CD14-positive monocyte (primary cell): ENCODE measurements at regions of chr17 and their contacts with region 1.

Region 1: GRCh38 chr17:62898220-62898864 is 67.7 kb upstream of the TANC2 start:
- DNase-seq: no peak
- H3K4me3 ChIP-seq: no peak overlapping the region
- H3K4me3 Mint-ChIP-seq: no peak overlapping the region
- H3K27ac ChIP-seq: no peak overlapping the region
- H3K27ac Mint-ChIP-seq: peak overlapping the region in 3 of 7 donors; percentile 81 to 89 (median 88)
- H3K4me1 ChIP-seq: peaks cover 40 to 41% of the 10 kb centered on the region in 2 donors
- H3K4me1 Mint-ChIP-seq: peaks cover 43% of the 10 kb centered on the region
- H3K27me3 ChIP-seq: no peaks in the 10 kb centered on the region
- H3K27me3 Mint-ChIP-seq: peaks cover 3 to 4% (median 3%) of the 10 kb centered on the region in 3 donors
- CTCF ChIP-seq: no peak

Region 2: DNA sequence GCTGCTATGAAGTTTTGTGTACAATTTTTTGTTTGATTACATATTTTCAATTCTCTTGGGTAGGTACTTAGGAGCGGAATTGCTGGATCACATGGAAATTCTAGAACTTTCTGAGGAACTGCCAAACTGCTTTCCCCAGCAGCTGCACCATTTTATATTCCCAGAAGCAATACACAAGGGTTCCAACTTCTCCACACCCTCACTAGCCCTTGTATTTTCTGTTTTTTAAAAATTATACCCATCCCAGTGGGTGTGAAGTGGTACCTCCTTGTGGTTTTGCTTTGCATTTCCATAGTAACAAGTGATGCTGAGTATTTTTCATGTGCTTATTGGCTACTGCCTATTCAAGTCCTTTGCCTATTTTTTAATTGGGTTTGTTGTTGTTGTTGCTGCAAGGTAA is 1328.2 kb before region 1 on chr17:
- intact Hi-C with region 1: no loop called
- DNase-seq: no peak
- H3K4me3 ChIP-seq: no peak overlapping the region
- H3K4me3 Mint-ChIP-seq: no peak overlapping the region
- H3K27ac ChIP-seq: no peak overlapping the region
- H3K27ac Mint-ChIP-seq: no peak overlapping the region
- H3K4me1 ChIP-seq: no peaks in the 10 kb centered on the region
- H3K4me1 Mint-ChIP-seq: no peaks in the 10 kb centered on the region
- H3K27me3 ChIP-seq: no peaks in the 10 kb centered on the region
- H3K27me3 Mint-ChIP-seq: peaks cover 2 to 8% (median 5%) of the 10 kb centered on the region in 3 donors
- CTCF ChIP-seq: no peak

Region 3: GRCh38 chr17:62833395-62833794 is 64.9 kb before region 1 on chr17:
- intact Hi-C with region 1: no loop called
- DNase-seq: no peak
- H3K4me3 ChIP-seq: no peak overlapping the region
- H3K4me3 Mint-ChIP-seq: no peak overlapping the region
- H3K27ac ChIP-seq: no peak overlapping the region
- H3K27ac Mint-ChIP-seq: no peak overlapping the region
- H3K4me1 ChIP-seq: peaks cover 5 to 10% of the 10 kb centered on the region in 2 donors
- H3K4me1 Mint-ChIP-seq: peaks cover 7% of the 10 kb centered on the region
- H3K27me3 ChIP-seq: no peaks in the 10 kb centered on the region
- H3K27me3 Mint-ChIP-seq: peaks cover 0 to 2% (median 0%) of the 10 kb centered on the region in 3 donors
- CTCF ChIP-seq: no peak

Region 4: DNA sequence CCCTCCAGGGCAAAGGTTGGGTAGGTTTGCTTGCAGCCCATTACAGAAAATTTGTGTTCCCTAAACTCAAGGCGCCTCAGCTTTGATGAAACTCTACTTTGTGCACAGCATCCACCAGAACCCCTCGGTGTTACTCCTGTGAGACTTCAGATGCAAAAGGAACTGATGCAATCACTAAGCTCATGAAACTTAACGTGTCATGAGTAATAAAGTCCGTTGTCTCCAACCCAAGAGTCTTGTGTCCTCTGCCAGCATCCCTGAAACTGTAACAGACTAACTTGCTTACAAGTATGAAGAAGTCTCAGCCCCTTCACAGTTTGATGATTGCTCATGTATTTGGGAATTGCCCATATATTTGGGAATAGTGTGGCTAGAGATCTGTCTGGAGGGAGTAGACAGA is 15.5 kb before region 1 on chr17:
- intact Hi-C with region 1: loop called in 1 of 2 experiments (anchors 2 kb)
- DNase-seq: peak; percentile 82 to 94 (median 91)
- H3K4me3 ChIP-seq: peak overlapping the region in 1 of 3 experiments; percentile 40
- H3K4me3 Mint-ChIP-seq: peak overlapping the region in 1 of 2 donors; percentile 57
- H3K27ac ChIP-seq: peak overlapping the region; percentile 34 to 89
- H3K27ac Mint-ChIP-seq: peak overlapping the region; percentile 90 to 94 (median 94)
- H3K4me1 ChIP-seq: peaks cover 34 to 37% of the 10 kb centered on the region in 2 donors
- H3K4me1 Mint-ChIP-seq: peaks cover 28% of the 10 kb centered on the region
- H3K27me3 ChIP-seq: no peaks in the 10 kb centered on the region
- H3K27me3 Mint-ChIP-seq: no peaks in the 10 kb centered on the region
- CTCF ChIP-seq: no peak

Region 5: GRCh38 chr17:63497708-63498483 is 599.6 kb after region 1 on chr17:
- intact Hi-C with region 1: no loop called
- DNase-seq: no peak
- H3K4me3 ChIP-seq: no peak overlapping the region
- H3K4me3 Mint-ChIP-seq: no peak overlapping the region
- H3K27ac ChIP-seq: no peak overlapping the region
- H3K27ac Mint-ChIP-seq: no peak overlapping the region
- H3K4me1 ChIP-seq: no peaks in the 10 kb centered on the region
- H3K4me1 Mint-ChIP-seq: peaks cover 16% of the 10 kb centered on the region
- H3K27me3 ChIP-seq: no peaks in the 10 kb centered on the region
- H3K27me3 Mint-ChIP-seq: peaks cover 9 to 12% (median 10%) of the 10 kb centered on the region in 3 donors
- CTCF ChIP-seq: no peak